Sciatic nerve (tissue), 2 donors: ENCODE measurements at regions of chr4 and their contacts with region 1.

Region 1: DNA sequence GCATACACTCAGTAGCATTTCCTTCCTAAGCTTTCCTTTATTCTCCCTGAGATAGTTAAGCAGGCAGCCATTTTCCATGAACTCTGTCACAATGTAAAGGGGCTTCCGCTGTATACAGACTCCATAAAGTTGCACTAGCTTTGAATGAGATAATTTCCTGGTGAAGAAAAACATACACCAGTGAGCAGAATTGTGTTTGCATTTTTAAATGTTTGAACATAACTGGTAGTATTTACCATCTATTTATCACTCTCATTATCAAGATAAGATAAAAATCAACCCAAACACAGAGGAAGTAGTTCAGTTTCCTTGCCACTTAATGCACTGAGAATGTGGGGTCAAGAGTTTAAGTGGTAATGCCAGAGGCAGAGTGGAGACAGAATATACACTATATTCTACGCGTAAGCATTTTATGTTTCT is 54.1 kb downstream of the TXK start:
- DNase-seq: no peak
- ATAC-seq: no peak

Region 2: DNA sequence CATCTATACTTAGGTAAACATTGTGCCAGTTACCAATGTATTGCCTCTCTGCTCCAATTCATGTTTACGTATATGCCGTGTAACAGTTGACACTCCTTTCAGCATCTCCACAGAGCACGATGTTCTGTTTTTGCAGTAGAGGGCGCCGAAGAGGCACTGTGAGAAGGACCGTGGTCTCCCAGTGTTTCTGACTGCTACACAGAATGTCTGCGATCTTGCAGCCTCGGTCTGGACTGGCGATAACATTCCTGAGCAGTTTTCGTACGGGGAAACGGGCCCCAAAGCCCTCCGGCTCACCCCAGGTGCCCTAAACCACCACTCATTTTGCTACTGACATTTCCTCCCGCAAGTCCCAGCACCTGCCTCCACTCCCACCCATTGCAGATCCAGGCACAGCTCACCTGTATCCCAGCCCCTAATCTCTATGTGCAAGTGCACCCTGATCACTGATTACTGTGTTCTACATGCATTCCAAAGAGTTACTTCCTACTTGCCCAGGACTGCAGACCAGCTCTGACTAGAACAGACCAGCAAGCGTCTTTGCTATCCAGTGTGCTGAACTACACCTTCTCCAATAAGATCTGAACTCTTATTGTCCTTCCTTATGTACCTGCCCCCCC is 153.2 kb before region 1 on chr4:
- intact Hi-C with region 1: loop called (anchors 10 kb)
- DNase-seq: peak; percentile 63
- ATAC-seq: peak; percentile 76

Region 3: GRCh38 chr4:48016141-48017103 is 63.6 kb before region 1 on chr4 and contains the starts of genes CNGA1 and NIPAL1:
- intact Hi-C with region 1: loop called (anchors 10 kb)
- DNase-seq: peak; percentile 82
- ATAC-seq: peak; percentile 94
- total RNA-seq, gene CNGA1: 11.9 TPM
- total RNA-seq, gene NIPAL1: 6.3 TPM

Region 4: GRCh38 chr4:48403358-48403757 is 323.4 kb after region 1 on chr4:
- intact Hi-C with region 1: no loop called
- DNase-seq: no peak
- ATAC-seq: no peak